Caco-2 (cell line): ENCODE measurements at regions of chr17 and their contacts with region 1.

Region 1: GRCh38 chr17:68771867-68772515 is 170.8 kb upstream of the FAM20A start:
- DNase-seq: peak in 1 of 2 experiments; percentile 40
- H3K4me3 ChIP-seq: no peak overlapping the region
- H3K4me3 Mint-ChIP-seq: no peak overlapping the region
- H3K27ac Mint-ChIP-seq: no peak overlapping the region
- H3K4me1 ChIP-seq: peaks cover 6% of the 10 kb centered on the region; the same call in 1 of the 2 replicates
- H3K4me1 Mint-ChIP-seq: peaks cover 6% of the 10 kb centered on the region
- H3K27me3 ChIP-seq: no peaks in the 10 kb centered on the region
- H3K27me3 Mint-ChIP-seq: no peaks in the 10 kb centered on the region
- CTCF ChIP-seq: peak; percentile 60 to 67

Region 2: GRCh38 chr17:69516911-69517310 is 744.9 kb after region 1 on chr17:
- CTCF ChIA-PET with region 1: no interaction called
- POLR2A ChIA-PET with region 1: no interaction called
- intact Hi-C with region 1: loop called (anchors 5 kb)
- DNase-seq: no peak
- H3K4me3 ChIP-seq: no peak overlapping the region
- H3K4me3 Mint-ChIP-seq: no peak overlapping the region
- H3K27ac Mint-ChIP-seq: no peak overlapping the region
- H3K4me1 ChIP-seq: no peaks in the 10 kb centered on the region
- H3K4me1 Mint-ChIP-seq: no peaks in the 10 kb centered on the region
- H3K27me3 ChIP-seq: no peaks in the 10 kb centered on the region
- H3K27me3 Mint-ChIP-seq: no peaks in the 10 kb centered on the region
- CTCF ChIP-seq: no peak